Caco-2 (cell line): ENCODE measurements at regions of chr10 and their contacts with region 1.

Region 1: GRCh38 chr10:11757821-11758463 is 15.8 kb downstream of the ECHDC3 start:
- DNase-seq: peak; percentile 89 to 94
- H3K4me3 ChIP-seq: no peak overlapping the region
- H3K4me3 Mint-ChIP-seq: no peak overlapping the region
- H3K27ac Mint-ChIP-seq: peak overlapping the region; percentile 15
- H3K4me1 ChIP-seq: peaks cover 6% of the 10 kb centered on the region
- H3K4me1 Mint-ChIP-seq: peaks cover 6% of the 10 kb centered on the region
- H3K27me3 ChIP-seq: no peaks in the 10 kb centered on the region
- H3K27me3 Mint-ChIP-seq: no peaks in the 10 kb centered on the region
- CTCF ChIP-seq: peak; percentile 95 to 99

Region 2: DNA sequence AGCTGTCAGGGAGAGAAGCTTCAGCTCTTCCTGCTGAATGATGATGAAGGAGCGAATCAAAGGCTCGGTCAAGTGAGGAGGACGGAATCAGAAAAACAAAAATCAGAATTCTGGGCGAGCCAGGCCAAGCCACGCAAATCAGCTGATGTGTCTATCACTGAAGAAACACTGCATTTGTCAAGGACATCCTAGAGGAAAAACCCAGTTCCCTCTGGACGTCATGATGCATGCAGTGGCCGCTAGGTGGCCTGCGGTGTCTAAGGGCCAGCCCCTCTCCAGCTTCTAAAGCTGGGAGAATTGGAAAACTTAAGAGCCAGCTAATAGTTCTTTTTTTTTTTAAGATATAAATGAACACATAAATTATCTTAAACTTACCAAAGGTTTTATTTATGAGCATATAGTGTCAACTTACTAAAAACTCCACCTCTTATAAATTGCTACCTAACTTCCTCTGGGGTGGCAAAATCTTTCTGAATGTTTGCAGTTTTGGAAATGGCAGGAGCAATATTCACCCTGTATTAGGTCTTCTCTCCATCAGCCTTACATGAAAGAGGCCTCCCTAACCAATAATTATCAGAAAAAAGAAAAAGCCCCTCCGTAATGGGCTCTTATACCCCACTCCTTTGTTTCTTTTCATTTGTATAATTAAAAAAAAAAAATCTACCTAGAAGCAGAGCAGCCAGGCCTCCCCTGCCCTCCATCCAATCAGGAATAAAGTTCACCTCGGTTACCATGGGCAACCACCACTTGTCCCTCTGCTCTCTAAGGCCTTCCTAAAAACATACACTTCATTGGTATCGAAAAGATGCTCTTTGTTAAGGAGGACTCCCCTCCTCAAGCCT is 333.3 kb before region 1 on chr10:
- CTCF ChIA-PET with region 1: interaction called, 12 read pairs
- POLR2A ChIA-PET with region 1: no interaction called
- intact Hi-C with region 1: loop called (anchors 1 kb)
- DNase-seq: peak; percentile 66 to 75
- H3K4me3 ChIP-seq: no peak overlapping the region
- H3K4me3 Mint-ChIP-seq: no peak overlapping the region
- H3K27ac Mint-ChIP-seq: no peak overlapping the region
- H3K4me1 ChIP-seq: no peaks in the 10 kb centered on the region
- H3K4me1 Mint-ChIP-seq: no peaks in the 10 kb centered on the region
- H3K27me3 ChIP-seq: no peaks in the 10 kb centered on the region
- H3K27me3 Mint-ChIP-seq: peaks cover 1% of the 10 kb centered on the region
- CTCF ChIP-seq: peak; percentile 97 to 99

Region 3: DNA sequence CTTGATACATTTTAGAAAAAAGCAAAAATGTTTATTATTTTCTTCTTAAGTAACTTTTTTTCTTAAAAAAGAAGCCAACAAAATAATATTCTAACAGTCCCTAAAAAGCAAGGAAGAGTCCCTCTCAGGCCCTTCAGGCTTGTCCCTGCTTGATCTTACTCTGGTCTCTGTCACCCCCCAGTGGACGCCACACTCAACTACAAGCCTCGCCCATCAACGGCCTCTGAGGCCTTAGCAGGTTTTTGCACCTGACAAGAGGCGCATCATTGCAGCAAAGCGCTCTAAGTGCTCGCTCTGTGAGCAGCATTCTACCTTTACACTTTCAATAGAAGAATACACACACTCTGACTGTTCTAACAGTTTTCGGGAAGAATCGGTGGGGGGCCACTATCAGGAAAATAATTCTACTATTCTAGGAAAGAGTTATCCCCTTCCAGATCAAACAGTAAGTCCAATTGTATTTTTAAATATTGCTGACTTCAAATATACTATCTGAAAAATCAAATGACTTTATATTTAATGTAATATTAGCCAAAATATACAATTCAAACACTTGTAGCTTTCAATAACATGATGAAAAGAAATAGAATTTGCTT is 285.7 kb before region 1 on chr10:
- CTCF ChIA-PET with region 1: no interaction called
- POLR2A ChIA-PET with region 1: no interaction called
- intact Hi-C with region 1: loop called (anchors 1 kb)
- DNase-seq: peak; percentile 71 to 86
- H3K4me3 ChIP-seq: no peak overlapping the region
- H3K4me3 Mint-ChIP-seq: no peak overlapping the region
- H3K27ac Mint-ChIP-seq: no peak overlapping the region
- H3K4me1 ChIP-seq: no peaks in the 10 kb centered on the region
- H3K4me1 Mint-ChIP-seq: no peaks in the 10 kb centered on the region
- H3K27me3 ChIP-seq: no peaks in the 10 kb centered on the region
- H3K27me3 Mint-ChIP-seq: no peaks in the 10 kb centered on the region
- CTCF ChIP-seq: peak; percentile 95 to 96

Region 4: DNA sequence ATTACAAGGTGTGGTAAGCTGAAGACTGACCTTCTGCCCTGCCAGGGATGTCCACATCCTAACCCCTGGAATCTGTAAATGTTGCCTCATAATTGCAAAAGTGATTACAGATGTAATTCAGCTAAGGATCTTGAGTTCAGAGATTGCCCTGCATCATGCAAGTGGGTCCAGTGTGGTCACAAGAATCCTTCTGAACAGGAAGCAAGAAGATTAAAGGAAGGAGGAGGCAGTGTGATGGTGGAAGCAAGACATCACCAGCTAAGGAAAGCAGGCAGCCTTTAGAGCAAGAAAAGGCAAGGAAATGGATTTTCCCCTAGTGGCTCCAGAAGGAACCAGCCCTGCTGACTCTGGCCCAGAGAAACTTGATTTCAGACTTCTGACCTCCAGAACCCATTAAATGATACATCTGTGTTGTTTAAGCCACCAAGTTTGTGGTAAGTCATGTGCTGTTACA is 224.6 kb before region 1 on chr10:
- CTCF ChIA-PET with region 1: no interaction called
- POLR2A ChIA-PET with region 1: no interaction called
- intact Hi-C with region 1: loop called (anchors 5 kb)
- DNase-seq: peak in 1 of 2 experiments; percentile 41
- H3K4me3 ChIP-seq: no peak overlapping the region
- H3K4me3 Mint-ChIP-seq: no peak overlapping the region
- H3K27ac Mint-ChIP-seq: no peak overlapping the region
- H3K4me1 ChIP-seq: no peaks in the 10 kb centered on the region
- H3K4me1 Mint-ChIP-seq: peaks cover 23% of the 10 kb centered on the region
- H3K27me3 ChIP-seq: no peaks in the 10 kb centered on the region
- H3K27me3 Mint-ChIP-seq: no peaks in the 10 kb centered on the region
- CTCF ChIP-seq: peak; percentile 45 to 51

Region 5: GRCh38 chr10:11724938-11725776 is 32.8 kb before region 1 on chr10:
- CTCF ChIA-PET with region 1: interaction called, 13 read pairs
- POLR2A ChIA-PET with region 1: no interaction called
- intact Hi-C with region 1: loop called (anchors 1 kb)
- DNase-seq: peak in 1 of 2 experiments; percentile 75
- H3K4me3 ChIP-seq: no peak overlapping the region
- H3K4me3 Mint-ChIP-seq: no peak overlapping the region
- H3K27ac Mint-ChIP-seq: no peak overlapping the region
- H3K4me1 ChIP-seq: no peaks in the 10 kb centered on the region
- H3K4me1 Mint-ChIP-seq: peaks cover 8% of the 10 kb centered on the region
- H3K27me3 ChIP-seq: no peaks in the 10 kb centered on the region
- H3K27me3 Mint-ChIP-seq: no peaks in the 10 kb centered on the region
- CTCF ChIP-seq: peak; percentile 86 to 94

Region 6: DNA sequence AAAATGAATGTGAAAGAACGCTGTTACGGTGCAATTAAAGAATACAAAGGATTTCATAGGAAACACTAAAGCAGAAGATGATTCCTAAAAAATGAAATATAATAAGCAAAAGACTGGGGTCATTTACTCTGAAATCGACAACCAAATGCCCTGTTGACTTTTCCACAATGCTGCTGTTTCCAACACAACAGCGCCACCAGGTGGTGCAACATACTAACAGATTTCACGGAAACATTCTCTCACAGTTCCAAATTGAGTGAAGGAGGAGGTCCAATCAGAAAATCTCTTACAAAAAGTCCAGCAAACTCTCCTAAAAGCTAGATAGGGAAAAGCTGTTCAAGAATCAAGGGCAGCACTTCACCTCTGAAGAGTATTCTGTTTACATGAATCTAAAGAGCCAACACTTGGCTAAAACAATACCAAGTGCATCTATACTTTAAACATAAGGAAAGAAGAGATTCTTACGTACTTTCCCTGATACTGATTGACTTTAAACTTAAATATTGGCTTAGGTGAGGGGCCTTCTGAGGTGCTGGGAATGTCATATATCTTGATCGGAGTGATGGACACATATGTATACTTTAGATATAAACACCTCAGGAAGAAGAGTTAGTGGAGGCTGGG is 228.8 kb after region 1 on chr10:
- CTCF ChIA-PET with region 1: interaction called, 4 read pairs
- POLR2A ChIA-PET with region 1: no interaction called
- intact Hi-C with region 1: loop called (anchors 1 kb)
- DNase-seq: peak; percentile 82 to 91
- H3K4me3 ChIP-seq: no peak overlapping the region
- H3K4me3 Mint-ChIP-seq: peak overlapping the region; percentile 20
- H3K27ac Mint-ChIP-seq: peak overlapping the region; percentile 20
- H3K4me1 ChIP-seq: peaks cover 11% of the 10 kb centered on the region
- H3K4me1 Mint-ChIP-seq: peaks cover 12% of the 10 kb centered on the region
- H3K27me3 ChIP-seq: no peaks in the 10 kb centered on the region
- H3K27me3 Mint-ChIP-seq: no peaks in the 10 kb centered on the region
- CTCF ChIP-seq: peak; percentile 96